ENCODE measurements at regions of chr16 and their contacts with region 1.

Region 1: GRCh38 chr16:50368410-50369132 is at the start of gene BRD7:
- DNase-seq: peak; percentile 56
- H3K4me3 Mint-ChIP-seq: peak within 1 kb of the TSS; percentile 96
- H3K27ac Mint-ChIP-seq: peak within 1 kb of the TSS; percentile 94
- H3K4me1 Mint-ChIP-seq: peaks cover 51% of the 10 kb centered on the region
- H3K27me3 Mint-ChIP-seq: no peaks in the 10 kb centered on the region
- total RNA-seq, gene BRD7: 88.8 and 91.0 TPM in 2 replicates

Region 2: GRCh38 chr16:50065624-50066481 is 302.7 kb before region 1 on chr16 and contains the start of gene HEATR3:
- intact Hi-C with region 1: loop called (anchors 2 kb)
- DNase-seq: peak; percentile 93
- H3K4me3 Mint-ChIP-seq: peak within 1 kb of the TSS; percentile 85
- H3K27ac Mint-ChIP-seq: peak within 1 kb of the TSS; percentile 90
- H3K4me1 Mint-ChIP-seq: peaks cover 39% of the 10 kb centered on the region
- H3K27me3 Mint-ChIP-seq: no peaks in the 10 kb centered on the region
- total RNA-seq, gene HEATR3: 29.1 and 30.7 TPM in 2 replicates

Region 3: GRCh38 chr16:50301626-50302471 is 66.7 kb before region 1 on chr16:
- intact Hi-C with region 1: no loop called
- DNase-seq: no peak
- H3K4me3 Mint-ChIP-seq: no peak overlapping the region
- H3K27ac Mint-ChIP-seq: no peak overlapping the region
- H3K4me1 Mint-ChIP-seq: no peaks in the 10 kb centered on the region
- H3K27me3 Mint-ChIP-seq: no peaks in the 10 kb centered on the region

Region 4: DNA sequence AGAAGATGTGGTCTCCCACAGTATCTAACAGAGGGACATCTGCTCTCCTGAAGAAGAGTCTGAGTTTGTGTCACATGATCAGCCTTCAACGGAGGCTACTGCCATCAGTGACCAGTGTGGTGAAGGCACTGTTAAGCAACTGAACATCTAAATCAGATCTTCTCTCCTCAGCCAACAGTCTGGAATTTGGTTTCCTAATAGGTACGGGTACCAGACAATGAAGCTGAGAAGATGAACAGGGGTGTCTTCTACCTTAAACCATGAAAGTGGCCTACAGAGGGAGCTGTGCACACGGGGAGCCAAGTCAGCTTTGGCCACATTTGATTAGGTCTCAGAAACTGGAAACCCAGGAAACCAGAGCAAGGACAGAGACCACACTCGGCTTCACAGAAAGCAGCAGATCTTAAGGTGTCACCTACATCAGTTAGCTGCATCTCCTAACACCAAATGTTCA is 41.6 kb before region 1 on chr16:
- intact Hi-C with region 1: loop called (anchors 1 kb)
- DNase-seq: peak; percentile 68
- H3K4me3 Mint-ChIP-seq: no peak overlapping the region
- H3K27ac Mint-ChIP-seq: no peak overlapping the region
- H3K4me1 Mint-ChIP-seq: peaks cover 45% of the 10 kb centered on the region
- H3K27me3 Mint-ChIP-seq: no peaks in the 10 kb centered on the region

Region 5: DNA sequence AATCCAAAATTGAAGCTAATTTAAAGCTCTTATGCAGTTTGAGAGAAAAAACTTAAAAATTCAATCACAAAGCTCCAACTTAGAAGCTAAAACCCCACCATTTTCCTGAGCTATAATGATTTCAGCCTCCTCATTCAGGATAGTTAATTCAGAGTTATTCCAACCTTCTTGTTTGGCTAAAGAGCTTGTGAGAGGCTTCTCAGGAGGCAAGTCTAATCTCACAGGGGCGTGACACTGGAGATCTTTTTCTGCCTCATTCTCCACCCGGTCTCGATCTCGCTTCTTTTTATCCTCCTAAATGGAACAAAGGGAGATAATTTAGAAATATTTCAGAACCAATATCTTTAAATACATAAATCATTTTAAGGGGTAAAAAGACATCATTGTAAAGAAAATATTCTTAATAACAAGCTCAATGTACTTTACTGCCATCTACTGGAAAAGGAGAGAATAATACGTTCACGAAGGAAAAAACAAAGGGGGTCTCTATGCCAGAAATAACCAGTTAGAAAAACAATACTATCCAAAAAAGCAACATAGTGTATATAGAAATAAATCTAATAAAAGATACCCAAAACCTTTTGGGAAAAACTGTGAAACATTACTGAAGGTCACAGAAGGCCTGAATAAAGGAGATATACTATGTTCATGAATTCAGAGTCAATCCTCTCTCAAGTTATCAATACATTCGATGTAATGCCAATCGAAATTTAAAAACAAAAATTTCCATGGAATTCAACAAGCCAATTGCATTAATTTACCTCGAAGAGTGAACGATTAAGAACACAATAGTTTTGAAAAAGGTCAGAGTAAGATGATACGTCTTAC is 13.7 kb before region 1 on chr16:
- intact Hi-C with region 1: no loop called
- DNase-seq: no peak
- H3K4me3 Mint-ChIP-seq: no peak overlapping the region
- H3K27ac Mint-ChIP-seq: no peak overlapping the region
- H3K4me1 Mint-ChIP-seq: peaks cover 29% of the 10 kb centered on the region
- H3K27me3 Mint-ChIP-seq: no peaks in the 10 kb centered on the region

Region 6: GRCh38 chr16:50489182-50489581 is 120.6 kb after region 1 on chr16:
- intact Hi-C with region 1: no loop called
- DNase-seq: no peak
- H3K4me3 Mint-ChIP-seq: no peak overlapping the region
- H3K27ac Mint-ChIP-seq: no peak overlapping the region
- H3K4me1 Mint-ChIP-seq: no peaks in the 10 kb centered on the region
- H3K27me3 Mint-ChIP-seq: peaks cover 3% of the 10 kb centered on the region

Region 7: DNA sequence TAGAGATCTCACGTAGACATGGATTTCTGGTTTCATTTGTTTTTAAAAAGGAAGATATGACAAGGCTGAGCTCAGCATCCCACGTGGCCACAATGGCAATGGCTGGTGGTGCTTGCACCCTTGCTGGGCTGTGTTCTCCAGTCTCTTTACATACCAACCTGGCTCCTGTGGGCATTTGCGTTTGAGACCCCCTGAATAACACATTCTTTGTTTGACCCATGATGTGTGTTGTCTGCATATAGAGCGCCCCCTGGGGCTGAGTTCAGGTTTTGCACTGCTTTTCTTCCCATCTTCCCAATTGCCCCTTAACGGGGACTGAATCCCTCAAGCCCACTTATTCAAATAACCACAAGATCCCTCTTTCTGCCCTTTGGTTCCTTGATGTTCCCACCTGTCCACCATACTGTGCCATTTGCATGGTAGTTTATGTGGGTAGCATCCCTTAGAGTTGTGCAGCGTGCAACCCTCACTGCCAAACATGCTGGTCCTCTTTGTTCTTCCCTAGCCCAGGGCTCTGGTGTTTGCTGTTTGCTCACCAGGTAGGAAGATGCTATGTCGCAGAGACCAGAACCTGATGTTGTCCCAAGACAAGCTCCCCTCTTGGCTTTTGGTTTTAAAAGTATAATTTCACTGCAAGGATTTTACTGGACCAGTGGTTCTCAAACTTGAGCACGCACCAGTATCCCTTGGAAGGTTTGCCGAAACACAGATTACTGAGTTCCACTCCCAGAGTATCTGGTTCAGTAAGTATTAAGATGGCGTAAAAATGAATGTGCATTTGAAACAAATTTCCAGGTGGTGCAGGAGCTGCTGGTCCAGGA is 141.2 kb after region 1 on chr16:
- intact Hi-C with region 1: loop called (anchors 10 kb)
- DNase-seq: peak; percentile 15
- H3K4me3 Mint-ChIP-seq: no peak overlapping the region
- H3K27ac Mint-ChIP-seq: no peak overlapping the region
- H3K4me1 Mint-ChIP-seq: no peaks in the 10 kb centered on the region
- H3K27me3 Mint-ChIP-seq: peaks cover 10% of the 10 kb centered on the region

Region 8: DNA sequence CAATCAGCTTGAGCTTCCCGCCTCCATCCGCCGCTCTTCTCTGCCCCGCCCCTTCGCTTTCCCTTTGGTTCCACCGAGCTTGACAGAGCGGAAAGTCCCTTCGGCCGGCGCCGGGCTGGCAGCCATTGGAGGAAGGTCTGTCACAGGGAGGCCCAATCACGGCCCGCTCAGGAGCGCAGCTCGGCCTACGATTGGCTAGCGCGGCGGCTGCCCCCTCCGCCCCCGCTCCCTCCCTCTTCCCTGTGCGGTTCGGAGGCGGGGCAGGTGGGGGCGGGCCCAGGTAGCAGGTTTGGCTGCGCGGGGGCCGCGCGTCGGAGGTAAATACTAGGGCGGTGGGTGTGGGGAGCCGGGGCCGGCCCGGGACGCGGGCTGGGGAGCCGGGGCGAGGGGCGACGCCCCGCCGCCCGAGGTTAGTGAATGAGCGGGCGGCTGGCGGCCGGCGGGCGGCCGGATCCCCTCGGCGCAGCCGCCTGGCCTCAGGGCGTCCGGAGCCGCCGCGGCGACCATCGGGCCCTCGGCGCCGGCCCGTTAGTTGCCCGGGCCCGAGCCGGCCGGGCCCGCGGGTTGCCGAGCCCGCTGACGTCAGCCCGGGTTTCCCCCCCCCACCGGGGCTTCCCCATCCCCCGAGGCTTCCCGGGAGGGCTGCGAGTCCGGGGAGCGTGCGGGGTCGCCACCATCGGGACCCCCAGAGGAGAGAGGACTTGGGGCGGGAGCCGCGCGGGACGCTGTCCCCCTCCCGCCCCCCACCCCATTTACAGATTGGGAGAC is 373.4 kb after region 1 on chr16 and contains the start of gene CYLD:
- intact Hi-C with region 1: loop called (anchors 1 kb)
- DNase-seq: peak; percentile 100
- H3K4me3 Mint-ChIP-seq: peak within 1 kb of the TSS; percentile 86
- H3K27ac Mint-ChIP-seq: peak within 1 kb of the TSS; percentile 93
- H3K4me1 Mint-ChIP-seq: peaks cover 64% of the 10 kb centered on the region
- H3K27me3 Mint-ChIP-seq: no peaks in the 10 kb centered on the region
- total RNA-seq, gene CYLD: 219 and 223 TPM in 2 replicates

Region 9: GRCh38 chr16:50806099-50807062 is 437.8 kb after region 1 on chr16:
- intact Hi-C with region 1: loop called (anchors 1 kb)
- DNase-seq: peak; percentile 78
- H3K4me3 Mint-ChIP-seq: peak overlapping the region; percentile 66
- H3K27ac Mint-ChIP-seq: peak overlapping the region; percentile 30
- H3K4me1 Mint-ChIP-seq: peaks cover 9% of the 10 kb centered on the region
- H3K27me3 Mint-ChIP-seq: no peaks in the 10 kb centered on the region

Measured in activated T-helper 1 cell treated with anti-CD3 and anti-CD28 coated beads, Interleukin-12 subunit alpha, Interleukin-12 subunit beta, Interleukin-2, Interleukin-4 antibody, amounts not matched to agents 30 ng/mL and 10 ng/mL and 1 ng/mL, durations not matched to agents 14 hours and 24 hours and 36 hours (primary cell).